IMR-90 (cell line): ENCODE measurements at regions of chr9 and their contacts with region 1.

Region 1: DNA sequence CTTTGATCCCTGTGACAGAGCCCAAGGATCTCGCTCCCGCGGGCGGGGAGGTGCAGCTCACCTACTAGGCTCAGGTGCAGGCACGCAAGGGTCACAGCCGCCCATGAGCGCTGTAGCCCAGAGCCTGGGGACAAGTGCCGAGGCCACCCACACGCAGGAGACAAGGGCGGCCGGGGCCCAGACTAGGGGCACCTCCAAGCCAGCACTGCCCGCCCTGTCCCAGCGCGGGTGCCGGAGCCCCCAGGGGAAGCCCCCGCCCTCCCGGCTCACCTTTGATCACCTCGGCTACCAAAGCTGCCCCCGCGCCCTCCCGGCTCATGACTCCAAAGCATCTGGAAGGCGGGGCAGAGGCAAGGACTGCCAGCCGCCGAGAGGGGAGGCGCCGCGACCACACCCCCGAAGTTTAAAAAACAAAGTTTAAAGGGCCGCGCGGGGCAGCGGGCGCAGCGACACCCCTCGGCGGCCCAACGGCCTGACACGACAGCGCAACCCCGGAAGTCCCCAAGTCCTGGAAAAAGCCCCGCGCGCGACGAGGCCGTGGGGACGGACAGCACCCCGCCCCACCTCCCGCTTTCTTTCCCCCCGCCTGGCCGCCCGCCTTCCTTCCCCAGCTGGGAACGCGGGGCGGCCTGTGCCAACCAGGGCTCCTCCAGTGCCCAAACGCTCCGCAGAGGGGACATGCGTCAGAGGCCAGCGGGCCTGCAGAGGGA is 53.0 kb downstream of the CDC14B start:
- DNase-seq: no peak
- ATAC-seq: peak; percentile 86
- H3K4me3 ChIP-seq: peak overlapping the region; percentile 58
- H3K27ac ChIP-seq: peak overlapping the region; percentile 52
- H3K4me1 ChIP-seq: peaks cover 3% of the 10 kb centered on the region; the same call in 1 of the 2 replicates
- H3K27me3 ChIP-seq: no peaks in the 10 kb centered on the region
- CTCF ChIP-seq: peak; percentile 47
- POLR2A ChIP-seq: no peak
- RAD21 ChIP-seq: peak; percentile 34

Region 2: DNA sequence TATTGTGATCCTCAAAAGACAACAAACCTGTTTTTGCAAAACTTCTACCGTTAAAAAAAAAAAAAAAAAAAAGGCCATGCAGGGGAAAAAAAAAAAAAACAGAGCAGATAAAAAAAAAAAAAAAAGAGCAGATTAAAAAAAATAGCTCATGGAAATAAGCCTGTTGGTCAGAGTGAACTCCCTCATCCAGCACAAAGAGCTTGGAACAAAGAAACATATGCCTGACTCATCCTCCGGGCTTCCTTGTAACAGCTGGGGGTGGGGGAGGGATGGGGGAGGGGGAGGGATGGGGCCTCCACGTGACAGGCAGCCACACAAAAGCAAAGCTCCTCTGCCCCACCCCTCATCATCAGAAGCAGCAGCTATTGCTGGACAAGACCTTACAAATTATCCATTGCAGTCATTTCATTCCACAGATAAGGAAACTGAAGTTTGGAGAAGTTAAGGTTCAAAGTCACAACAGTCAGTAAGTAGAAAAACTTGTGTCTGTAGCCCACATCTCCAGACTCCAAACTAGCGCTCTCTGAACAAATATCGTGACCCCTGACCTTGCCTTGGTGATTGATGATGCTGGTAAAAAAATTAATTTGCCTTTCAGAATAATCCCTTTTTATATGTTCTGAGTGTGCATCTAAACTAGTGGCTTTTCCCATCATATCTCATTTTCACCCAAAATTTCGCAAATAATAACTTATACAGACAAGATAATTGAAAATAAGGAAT is 222.0 kb before region 1 on chr9:
- CTCF ChIA-PET with region 1: no interaction called
- POLR2A ChIA-PET with region 1: no interaction called
- dilution Hi-C with region 1: no loop called
- in situ Hi-C with region 1: no loop called
- intact Hi-C with region 1: loop called (anchors 5 kb)
- DNase-seq: peak; percentile 95
- ATAC-seq: peak; percentile 77
- H3K4me3 ChIP-seq: no peak overlapping the region
- H3K27ac ChIP-seq: peak overlapping the region; percentile 63; the same call in 1 of the 2 replicates
- H3K4me1 ChIP-seq: peaks cover 8% of the 10 kb centered on the region
- H3K27me3 ChIP-seq: no peaks in the 10 kb centered on the region
- CTCF ChIP-seq: no peak
- POLR2A ChIP-seq: no peak
- RAD21 ChIP-seq: no peak

Region 3: DNA sequence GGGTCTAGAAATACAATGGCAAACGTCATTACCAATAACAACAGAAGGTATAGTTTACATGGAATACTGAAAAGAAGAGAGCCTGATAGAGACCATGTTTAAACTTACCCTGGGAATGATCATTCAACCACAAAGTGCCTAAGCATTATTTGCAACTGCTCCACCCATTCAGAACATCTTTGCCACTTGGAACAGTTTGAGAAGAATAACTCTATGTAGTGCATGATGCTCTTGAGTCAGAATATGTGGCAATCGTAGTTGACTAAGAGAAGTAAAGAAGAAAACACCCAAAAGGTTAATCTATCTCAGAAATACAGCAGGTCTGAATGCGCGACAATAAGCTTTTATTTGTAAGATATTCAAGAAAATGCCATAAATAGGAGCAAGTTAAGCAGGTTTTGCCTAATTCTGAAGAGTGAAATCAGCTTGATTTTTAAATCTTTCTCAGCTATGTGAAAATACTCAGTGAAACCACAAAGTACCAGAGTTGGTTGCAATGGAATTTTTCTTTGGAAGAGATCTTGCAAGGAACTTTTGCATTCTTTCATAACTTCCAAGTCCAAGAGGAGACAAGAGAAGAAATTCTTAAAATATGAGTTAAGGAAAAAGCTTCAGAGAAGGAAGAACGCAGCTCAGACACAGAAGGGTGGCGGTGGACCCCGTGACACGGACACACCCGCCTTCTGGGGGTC is 52.4 kb before region 1 on chr9:
- CTCF ChIA-PET with region 1: no interaction called
- POLR2A ChIA-PET with region 1: no interaction called
- dilution Hi-C with region 1: no loop called
- in situ Hi-C with region 1: no loop called
- intact Hi-C with region 1: no loop called
- DNase-seq: peak; percentile 73
- ATAC-seq: peak; percentile 65
- H3K4me3 ChIP-seq: no peak overlapping the region
- H3K27ac ChIP-seq: peak overlapping the region; percentile 16; the same call in 1 of the 2 replicates
- H3K4me1 ChIP-seq: peaks cover 15% of the 10 kb centered on the region
- H3K27me3 ChIP-seq: no peaks in the 10 kb centered on the region
- CTCF ChIP-seq: no peak
- POLR2A ChIP-seq: no peak
- RAD21 ChIP-seq: no peak

Region 4: GRCh38 chr9:96612105-96612965 is 45.7 kb after region 1 on chr9:
- CTCF ChIA-PET with region 1: no interaction called
- POLR2A ChIA-PET with region 1: no interaction called
- dilution Hi-C with region 1: no loop called
- in situ Hi-C with region 1: no loop called
- intact Hi-C with region 1: loop called (anchors 5 kb)
- DNase-seq: peak; percentile 96
- ATAC-seq: peak; percentile 93
- H3K4me3 ChIP-seq: peak overlapping the region; percentile 0; the same call in 1 of the 2 replicates
- H3K27ac ChIP-seq: peak overlapping the region; percentile 4; the same call in 1 of the 2 replicates
- H3K4me1 ChIP-seq: peaks cover 8% of the 10 kb centered on the region
- H3K27me3 ChIP-seq: no peaks in the 10 kb centered on the region
- CTCF ChIP-seq: no peak
- POLR2A ChIP-seq: peak; percentile 68; the same call in 1 of the 2 replicates
- RAD21 ChIP-seq: 0 out of 2 replicates have a peak, but pooled peaks have one; percentile 23

Region 5: DNA sequence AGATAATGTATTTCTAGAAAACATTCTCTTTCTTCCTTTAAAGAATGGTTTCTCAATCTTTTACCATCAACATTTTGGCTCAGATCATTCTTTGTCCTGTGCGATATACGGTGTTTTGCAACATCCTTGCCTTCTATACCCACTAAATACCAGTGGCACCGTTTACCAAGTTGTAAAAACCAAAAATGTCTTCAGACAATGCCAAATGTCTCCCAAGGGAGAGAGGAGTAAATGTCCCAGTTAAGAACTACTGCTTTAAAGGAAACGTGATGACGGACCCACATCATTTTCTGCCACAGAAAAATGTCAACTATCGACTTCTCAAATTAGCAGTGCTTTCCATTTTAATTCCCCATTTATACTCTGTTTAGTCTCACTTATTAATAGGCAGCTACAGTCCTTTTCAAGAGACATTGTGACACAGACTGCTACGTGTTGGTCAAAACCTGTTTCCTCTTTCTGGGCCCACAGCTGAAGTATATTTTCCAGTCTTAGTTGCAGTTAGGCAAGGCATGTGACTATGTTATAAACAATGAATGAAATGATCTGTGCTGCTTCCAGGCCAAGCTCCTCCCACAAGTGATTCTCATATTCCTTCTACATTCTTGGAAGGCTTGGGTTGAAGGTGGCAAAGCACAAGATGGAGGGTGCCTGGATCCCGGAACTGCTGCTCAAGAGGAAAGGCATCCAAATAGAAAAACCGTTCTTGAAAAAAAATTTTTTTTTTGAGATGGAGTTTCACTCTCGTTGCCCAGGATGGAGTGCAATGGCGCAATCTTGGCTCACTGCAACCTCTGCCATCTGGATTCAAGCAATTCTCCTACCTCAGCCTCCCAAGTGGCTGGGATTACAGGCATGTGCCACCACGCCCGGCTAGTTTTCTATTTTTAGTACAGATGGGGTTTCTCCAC is 79.7 kb after region 1 on chr9:
- CTCF ChIA-PET with region 1: no interaction called
- POLR2A ChIA-PET with region 1: interaction called, 15 read pairs
- dilution Hi-C with region 1: no loop called
- in situ Hi-C with region 1: no loop called
- intact Hi-C with region 1: loop called (anchors 5 kb)
- DNase-seq: peak; percentile 86
- ATAC-seq: peak; percentile 98
- H3K4me3 ChIP-seq: no peak overlapping the region
- H3K27ac ChIP-seq: peak overlapping the region; percentile 54; the same call in 1 of the 2 replicates
- H3K4me1 ChIP-seq: peaks cover 1% of the 10 kb centered on the region; the same call in 1 of the 2 replicates
- H3K27me3 ChIP-seq: no peaks in the 10 kb centered on the region
- CTCF ChIP-seq: no peak
- POLR2A ChIP-seq: no peak
- RAD21 ChIP-seq: no peak

Region 6: DNA sequence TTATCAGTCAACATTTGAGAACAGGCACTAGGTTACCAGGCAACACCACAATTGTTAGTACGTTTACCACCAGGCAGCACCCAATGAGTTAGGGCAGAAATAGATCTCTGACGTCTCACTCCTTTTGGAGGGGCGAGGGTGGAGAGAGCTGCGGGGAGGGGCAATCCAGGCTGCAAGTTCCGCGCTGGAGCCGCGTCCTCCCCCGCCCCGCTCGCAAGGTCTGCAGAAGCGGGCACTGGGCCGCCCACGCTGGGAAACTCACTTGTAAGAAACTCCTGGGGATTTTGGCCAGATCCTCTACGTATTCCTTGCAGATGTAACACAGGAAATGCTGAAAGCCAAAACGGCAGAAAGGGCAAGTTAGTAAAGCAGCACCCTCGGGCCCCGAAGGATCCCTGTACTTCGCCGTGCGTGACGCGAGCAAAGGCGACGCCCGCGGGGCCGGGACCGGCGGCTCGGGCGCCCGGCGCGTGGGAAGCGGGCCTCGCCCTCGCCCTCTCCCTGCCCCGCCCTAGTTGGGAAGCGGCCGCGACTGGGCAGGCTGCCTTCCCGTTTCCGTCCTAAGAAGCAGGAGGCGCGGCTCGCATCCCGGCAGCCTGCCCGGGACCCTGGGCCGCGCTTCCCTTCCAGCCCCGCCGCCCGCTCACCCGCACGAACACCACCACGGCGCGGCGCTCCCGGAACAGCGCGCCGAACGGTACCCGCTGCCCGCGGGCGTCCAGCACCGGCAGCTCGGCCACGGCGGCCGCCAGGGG is 88.0 kb after region 1 on chr9:
- CTCF ChIA-PET with region 1: no interaction called
- POLR2A ChIA-PET with region 1: no interaction called
- dilution Hi-C with region 1: no loop called
- in situ Hi-C with region 1: no loop called
- intact Hi-C with region 1: loop called (anchors 5 kb)
- DNase-seq: peak; percentile 86
- ATAC-seq: peak; percentile 80
- H3K4me3 ChIP-seq: peak overlapping the region; percentile 61
- H3K27ac ChIP-seq: peak overlapping the region; percentile 45
- H3K4me1 ChIP-seq: no peaks in the 10 kb centered on the region
- H3K27me3 ChIP-seq: no peaks in the 10 kb centered on the region; the same call in 1 of the 2 replicates
- CTCF ChIP-seq: peak; percentile 24; the same call in 1 of the 2 replicates
- POLR2A ChIP-seq: peak; percentile 12
- RAD21 ChIP-seq: no peak

Region 7: DNA sequence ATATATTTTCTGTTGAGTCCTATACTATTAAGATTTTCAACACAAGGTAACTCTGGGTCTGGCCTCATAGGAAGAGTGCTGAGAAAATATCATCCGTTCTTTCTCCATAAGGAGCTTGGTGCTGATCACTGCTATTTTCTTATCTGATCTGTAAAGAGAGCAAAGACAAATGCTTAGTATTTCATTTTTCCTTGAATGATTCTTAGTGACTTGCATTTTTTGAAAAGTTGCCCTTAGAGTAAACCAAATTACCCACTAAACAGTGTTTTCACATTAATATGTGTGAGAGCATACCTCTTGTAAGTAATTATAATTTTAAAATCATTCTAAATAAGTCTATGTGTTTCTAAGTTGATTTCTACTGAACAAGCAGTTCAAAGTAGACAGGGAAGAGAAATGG is 593.6 kb after region 1 on chr9:
- CTCF ChIA-PET with region 1: no interaction called
- POLR2A ChIA-PET with region 1: no interaction called
- dilution Hi-C with region 1: no loop called
- in situ Hi-C with region 1: no loop called
- intact Hi-C with region 1: no loop called
- DNase-seq: no peak
- ATAC-seq: no peak
- H3K4me3 ChIP-seq: no peak overlapping the region
- H3K27ac ChIP-seq: no peak overlapping the region
- H3K4me1 ChIP-seq: no peaks in the 10 kb centered on the region
- H3K27me3 ChIP-seq: no peaks in the 10 kb centered on the region
- CTCF ChIP-seq: no peak
- POLR2A ChIP-seq: no peak
- RAD21 ChIP-seq: no peak